ENCODE measurements at regions of chr1 and their contacts with region 1.

Region 1: DNA sequence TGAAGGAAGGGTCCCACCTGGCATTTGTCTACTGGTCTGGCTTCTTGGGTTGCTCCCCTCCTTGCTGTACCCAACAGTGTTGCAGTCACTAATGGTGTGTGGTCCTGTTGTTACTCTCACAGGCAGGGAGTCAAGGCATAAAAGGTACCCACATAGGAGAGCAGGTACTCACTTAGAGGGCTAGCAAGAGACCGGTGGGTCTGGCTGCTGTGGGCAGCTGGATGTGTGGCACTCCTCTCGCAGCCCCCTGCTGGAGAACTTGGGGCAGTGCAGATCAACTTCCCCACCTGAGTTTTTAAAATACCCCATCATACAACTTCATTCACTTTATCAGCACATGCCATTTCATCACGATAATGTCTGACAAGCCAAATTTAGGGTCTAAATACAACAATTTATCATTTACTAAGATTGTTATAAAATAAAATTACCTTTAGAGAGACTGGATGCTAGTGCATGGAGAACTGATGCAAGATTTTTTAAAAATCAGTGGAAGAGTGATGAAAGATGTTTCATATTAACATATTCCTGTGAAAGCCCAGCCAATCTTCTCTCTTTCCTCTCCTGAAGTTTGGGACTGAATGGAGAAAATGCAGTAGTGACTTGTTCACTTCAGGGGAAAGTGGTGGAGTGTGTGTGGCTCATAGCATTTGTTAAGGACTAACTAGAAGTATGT is 42.8 kb downstream of the ACP6 start:
- DNase-seq: peak; percentile 55
- ATAC-seq: peak; percentile 72
- H3K4me3 Mint-ChIP-seq: no peak overlapping the region
- H3K27ac Mint-ChIP-seq: no peak overlapping the region
- H3K4me1 Mint-ChIP-seq: peaks cover 19% of the 10 kb centered on the region
- H3K27me3 Mint-ChIP-seq: no peaks in the 10 kb centered on the region

Region 2: DNA sequence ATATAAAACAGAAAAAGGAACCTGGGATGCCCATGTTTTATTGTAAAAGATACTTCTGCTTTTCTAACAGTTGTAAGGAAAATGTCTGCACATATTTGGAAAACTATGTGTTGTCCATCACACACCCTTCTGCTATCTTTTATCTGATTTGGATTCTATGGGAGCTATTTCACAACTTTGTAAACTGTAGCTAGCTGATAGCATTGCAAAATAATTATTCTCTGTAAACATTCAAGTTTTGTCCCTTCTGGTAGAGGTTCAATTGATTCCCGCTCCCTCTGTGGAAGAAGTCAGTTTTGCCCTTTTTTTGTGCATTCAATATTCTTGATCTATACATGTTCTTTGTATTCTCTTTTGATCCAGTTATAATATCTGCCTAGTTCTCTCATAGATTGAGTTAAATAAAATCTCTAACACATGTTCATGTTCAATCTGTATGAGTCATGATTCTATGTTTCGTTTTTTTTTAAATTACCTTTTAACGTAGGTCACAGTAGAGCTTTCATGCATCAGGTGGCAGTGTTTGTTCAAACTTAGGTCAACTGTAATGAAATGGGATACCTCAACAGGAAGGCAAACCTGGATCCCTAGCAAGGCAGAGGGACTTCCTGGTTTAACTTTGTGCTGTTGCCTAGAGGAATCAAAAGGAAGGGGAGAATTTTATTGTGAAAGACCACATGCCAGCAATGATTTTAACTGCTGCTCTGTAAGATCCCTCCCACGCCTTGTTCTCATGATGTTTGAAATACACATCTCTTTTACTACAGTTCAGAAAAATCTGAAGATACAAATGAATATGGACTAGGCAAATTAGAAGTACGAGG is 112.3 kb before region 1 on chr1:
- CTCF ChIA-PET with region 1: interaction called, 11 read pairs
- DNase-seq: no peak
- ATAC-seq: no peak
- H3K4me3 Mint-ChIP-seq: no peak overlapping the region
- H3K27ac Mint-ChIP-seq: no peak overlapping the region
- H3K4me1 Mint-ChIP-seq: no peaks in the 10 kb centered on the region
- H3K27me3 Mint-ChIP-seq: peaks cover 25% of the 10 kb centered on the region

Region 3: DNA sequence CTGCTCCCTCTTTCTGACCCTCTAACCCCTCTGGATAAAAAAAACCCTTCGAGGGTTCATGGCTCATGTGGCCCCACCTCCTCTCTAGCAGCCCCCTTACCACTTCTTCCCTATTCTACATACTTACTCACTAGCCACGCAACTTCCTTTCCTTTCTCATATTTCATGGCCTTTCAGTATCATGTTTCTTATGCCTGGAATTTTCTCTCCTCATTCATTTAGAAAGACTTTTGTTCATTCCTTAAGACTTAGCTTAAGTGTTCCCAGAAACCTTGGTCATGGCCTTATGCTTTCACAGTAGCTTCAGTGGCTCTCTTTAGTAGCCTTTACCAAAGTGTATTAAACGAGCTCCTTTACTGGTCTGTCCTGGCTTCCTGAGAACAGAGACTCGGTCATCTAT is 36.6 kb after region 1 on chr1:
- CTCF ChIA-PET with region 1: no interaction called
- DNase-seq: no peak
- ATAC-seq: no peak
- H3K4me3 Mint-ChIP-seq: no peak overlapping the region
- H3K27ac Mint-ChIP-seq: no peak overlapping the region
- H3K4me1 Mint-ChIP-seq: peaks cover 26% of the 10 kb centered on the region
- H3K27me3 Mint-ChIP-seq: no peaks in the 10 kb centered on the region

Region 4: GRCh38 chr1:147700042-147701006 is 72.8 kb after region 1 on chr1:
- CTCF ChIA-PET with region 1: interaction called, 13 read pairs
- DNase-seq: peak; percentile 71
- ATAC-seq: peak; percentile 95
- H3K4me3 Mint-ChIP-seq: no peak overlapping the region
- H3K27ac Mint-ChIP-seq: no peak overlapping the region
- H3K4me1 Mint-ChIP-seq: peaks cover 6% of the 10 kb centered on the region
- H3K27me3 Mint-ChIP-seq: peaks cover 24% of the 10 kb centered on the region